Activated CD8-positive, alpha-beta T cell treated with anti-CD3 and anti-CD28 coated beads, Interleukin-2, amount 10 ng/mL, durations not matched to agents 7 days and 5 days (primary cell): ENCODE measurements at regions of chrX and their contacts with region 1.

Region 1: GRCh38 chrX:24395775-24396174 is 35.3 kb downstream of the SUPT20HL1 start:
- DNase-seq: peak; percentile 59
- ATAC-seq: no peak
- H3K4me3 Mint-ChIP-seq: no peak overlapping the region
- H3K27ac Mint-ChIP-seq: no peak overlapping the region
- H3K4me1 Mint-ChIP-seq: no peaks in the 10 kb centered on the region
- H3K27me3 Mint-ChIP-seq: peaks cover 8% of the 10 kb centered on the region

Region 2: GRCh38 chrX:24054182-24055042 is 341.4 kb before region 1 on chrX and contains the start of gene EIF2S3:
- CTCF ChIA-PET with region 1: no interaction called
- POLR2A ChIA-PET with region 1: no interaction called
- DNase-seq: peak; percentile 91
- ATAC-seq: peak; percentile 89
- H3K4me3 Mint-ChIP-seq: no peak within 1 kb of the TSS
- H3K27ac Mint-ChIP-seq: peak within 1 kb of the TSS; percentile 100
- H3K4me1 Mint-ChIP-seq: peaks cover 6% of the 10 kb centered on the region
- H3K27me3 Mint-ChIP-seq: no peaks in the 10 kb centered on the region
- total RNA-seq, gene EIF2S3: 187 to 197 TPM

Region 3: GRCh38 chrX:24259544-24260240 is 136.1 kb before region 1 on chrX:
- CTCF ChIA-PET with region 1: interaction called, 13 read pairs
- POLR2A ChIA-PET with region 1: no interaction called
- DNase-seq: peak; percentile 38
- ATAC-seq: no peak
- H3K4me3 Mint-ChIP-seq: no peak overlapping the region
- H3K27ac Mint-ChIP-seq: no peak overlapping the region
- H3K4me1 Mint-ChIP-seq: peaks cover 23% of the 10 kb centered on the region
- H3K27me3 Mint-ChIP-seq: no peaks in the 10 kb centered on the region

Region 4: GRCh38 chrX:24371391-24371972 is 24.3 kb before region 1 on chrX:
- CTCF ChIA-PET with region 1: interaction called, 17 read pairs
- POLR2A ChIA-PET with region 1: no interaction called
- DNase-seq: peak; percentile 72
- ATAC-seq: peak; percentile 85
- H3K4me3 Mint-ChIP-seq: peak overlapping the region; percentile 42
- H3K27ac Mint-ChIP-seq: no peak overlapping the region
- H3K4me1 Mint-ChIP-seq: peaks cover 8% of the 10 kb centered on the region
- H3K27me3 Mint-ChIP-seq: peaks cover 4% of the 10 kb centered on the region

Region 5: DNA sequence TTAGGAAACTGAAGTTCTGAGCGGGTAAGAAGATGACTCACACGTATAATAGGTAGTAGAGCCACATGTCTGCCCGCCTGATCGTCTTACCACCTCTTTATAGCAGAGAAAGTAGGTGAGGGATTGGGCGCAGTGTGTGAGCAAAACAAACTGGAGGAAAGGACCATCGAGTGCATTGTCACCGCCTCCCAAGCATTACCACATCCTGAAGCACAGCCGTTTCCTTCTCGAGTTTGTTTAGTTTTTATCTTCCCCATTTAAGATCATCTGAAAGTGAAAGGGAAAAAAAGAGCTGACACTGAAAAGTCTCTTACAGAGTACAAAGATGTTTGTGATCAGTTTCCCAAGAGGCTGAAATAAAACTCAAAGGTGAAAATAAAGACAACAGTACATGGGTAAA is 84.1 kb after region 1 on chrX:
- CTCF ChIA-PET with region 1: interaction called, 10 read pairs
- POLR2A ChIA-PET with region 1: no interaction called
- DNase-seq: peak; percentile 86
- ATAC-seq: peak; percentile 96
- H3K4me3 Mint-ChIP-seq: peak overlapping the region; percentile 77
- H3K27ac Mint-ChIP-seq: peak overlapping the region; percentile 93
- H3K4me1 Mint-ChIP-seq: peaks cover 68% of the 10 kb centered on the region
- H3K27me3 Mint-ChIP-seq: no peaks in the 10 kb centered on the region